H1 (cell line): ENCODE measurements at regions of chr16 and their contacts with region 1.

Region 1: DNA sequence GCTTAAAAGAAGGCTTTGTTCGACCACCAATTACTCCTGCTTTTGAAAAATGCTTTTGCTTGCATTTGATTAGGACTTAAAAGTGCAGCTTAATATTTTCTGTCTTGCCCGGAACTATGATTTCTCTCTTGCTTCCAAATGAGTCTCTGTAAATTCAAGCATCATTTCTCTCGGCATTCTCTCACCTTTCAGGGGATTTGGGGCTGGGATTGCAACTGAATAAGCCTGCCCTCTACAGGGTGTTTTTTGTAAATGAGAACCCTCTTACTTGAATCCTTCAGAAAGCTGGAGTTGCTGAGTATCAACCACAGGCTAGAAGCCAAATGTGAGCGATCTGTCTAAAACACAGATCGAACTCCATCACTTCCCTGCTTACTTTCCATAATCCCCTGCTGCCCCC is 234.6 kb downstream of the TMEM114 start:
- DNase-seq: no peak
- H3K4me3 ChIP-seq: no peak overlapping the region
- H3K27ac ChIP-seq: no peak overlapping the region
- H3K4me1 ChIP-seq: no peaks in the 10 kb centered on the region
- H3K27me3 ChIP-seq: no peaks in the 10 kb centered on the region
- CTCF ChIP-seq: peak in 2 of 3 experiments; percentile 53 to 56; a peak in 2 of 4 replicates
- EP300 ChIP-seq: no peak
- POLR2A ChIP-seq: no peak
- RAD21 ChIP-seq: peak; percentile 66 to 75

Region 2: GRCh38 chr16:8326249-8326648 is 29.4 kb before region 1 on chr16:
- CTCF ChIA-PET with region 1: interaction called, 11 read pairs
- POLR2A ChIA-PET with region 1: no interaction called
- DNase-seq: no peak
- H3K4me3 ChIP-seq: no peak overlapping the region
- H3K27ac ChIP-seq: no peak overlapping the region
- H3K4me1 ChIP-seq: no peaks in the 10 kb centered on the region
- H3K27me3 ChIP-seq: no peaks in the 10 kb centered on the region
- CTCF ChIP-seq: no peak
- EP300 ChIP-seq: no peak
- POLR2A ChIP-seq: no peak
- RAD21 ChIP-seq: no peak

Region 3: DNA sequence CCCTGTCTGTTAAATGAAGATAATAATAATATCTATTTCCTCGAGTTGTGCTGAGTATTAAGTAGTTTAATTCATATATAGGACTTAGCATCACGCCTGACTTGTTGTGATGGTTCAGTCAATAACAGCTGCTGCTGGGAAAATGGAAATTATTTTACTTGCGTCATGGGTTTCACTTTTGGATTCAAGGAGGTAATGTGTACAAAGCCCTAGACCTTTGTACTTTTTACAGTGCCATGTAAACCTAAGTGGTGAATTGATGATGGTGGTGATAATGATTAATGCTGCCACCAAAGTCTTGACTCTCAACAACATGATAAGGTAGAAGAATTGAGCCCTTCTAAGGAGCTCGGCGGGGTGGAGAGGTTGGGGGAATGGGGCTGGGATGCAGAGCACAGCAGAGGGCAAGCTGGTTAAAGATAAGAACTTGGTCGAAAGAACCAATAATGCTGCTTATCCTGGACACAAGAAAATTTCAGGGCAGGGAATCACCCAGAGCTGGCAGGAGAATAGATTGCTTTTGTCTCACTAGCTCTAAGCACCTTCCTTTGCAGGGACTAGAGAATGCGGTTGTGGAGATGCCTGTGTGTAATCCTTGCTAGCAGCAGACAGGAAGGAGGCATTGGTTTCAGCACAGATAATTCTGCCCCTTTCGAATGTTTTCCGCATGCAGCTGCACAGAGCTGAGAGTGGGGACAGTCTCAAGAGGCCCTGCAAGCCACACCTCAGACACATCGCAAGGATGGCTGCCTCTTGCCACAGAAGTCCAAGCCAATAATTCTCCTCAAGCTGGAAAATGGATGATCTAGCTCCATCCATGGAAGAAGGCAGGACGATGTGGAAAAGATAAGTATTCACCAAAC is 47.5 kb after region 1 on chr16:
- CTCF ChIA-PET with region 1: no interaction called
- POLR2A ChIA-PET with region 1: no interaction called
- DNase-seq: no peak
- H3K4me3 ChIP-seq: no peak overlapping the region
- H3K27ac ChIP-seq: no peak overlapping the region
- H3K4me1 ChIP-seq: no peaks in the 10 kb centered on the region
- H3K27me3 ChIP-seq: no peaks in the 10 kb centered on the region; a peak in 1 of 7 replicates
- CTCF ChIP-seq: no peak
- EP300 ChIP-seq: no peak
- POLR2A ChIP-seq: no peak
- RAD21 ChIP-seq: no peak